ENCODE measurements at regions of chr5 and their contacts with region 1.

Region 1: DNA sequence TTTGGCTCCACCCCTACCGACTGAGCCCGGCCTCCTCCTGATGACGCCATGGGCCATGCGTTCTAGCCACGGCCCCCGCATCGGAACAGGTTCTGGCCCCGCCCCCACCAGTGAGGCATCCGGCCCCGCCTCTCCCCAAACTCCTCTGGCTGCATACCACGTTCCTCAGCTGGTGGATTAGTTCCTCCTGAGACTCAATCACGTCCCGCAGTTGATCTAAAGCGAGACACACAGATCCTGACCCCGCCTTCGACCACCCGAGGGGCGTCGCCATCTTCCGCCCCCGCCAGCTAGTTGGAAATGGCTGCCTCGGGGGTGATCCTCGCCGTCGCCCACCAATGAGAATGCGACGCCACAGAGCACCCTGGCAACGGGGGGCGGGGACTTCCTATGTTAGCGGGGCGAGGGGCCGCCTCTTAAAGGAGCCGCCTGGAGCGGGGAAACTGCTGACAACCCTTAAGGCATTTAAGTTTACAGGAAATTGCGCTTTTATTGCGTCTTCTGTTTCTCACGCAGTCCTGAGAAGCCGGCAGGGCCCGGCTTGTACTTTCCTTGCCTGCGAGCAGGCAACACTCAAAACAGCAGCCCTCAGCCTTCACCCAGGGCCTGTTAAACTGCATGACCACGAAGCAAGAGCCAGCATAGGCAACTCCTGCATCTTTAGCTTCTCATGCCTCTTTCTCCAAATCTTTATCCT is at the start of gene SPATA24:
- DNase-seq: peak; percentile 95
- ATAC-seq: peak; percentile 86
- H3K4me3 ChIP-seq: peak within 1 kb of the TSS; percentile 74
- H3K27ac ChIP-seq: peak within 1 kb of the TSS; percentile 83
- H3K4me1 ChIP-seq: peaks cover 30% of the 10 kb centered on the region
- H3K27me3 ChIP-seq: no peaks in the 10 kb centered on the region
- CTCF ChIP-seq: no peak
- EP300 ChIP-seq: 0 out of 4 replicates have a peak, but pooled peaks of 1 of the 2 experiments have one; percentile 14
- POLR2A ChIP-seq: peak; percentile 78
- RAD21 ChIP-seq: no peak
- polyA plus RNA-seq, gene SPATA24: 7.6 to 8.5 TPM

Region 2: GRCh38 chr5:139104577-139105276 is 299.2 kb before region 1 on chr5:
- CTCF ChIA-PET with region 1: no interaction called
- POLR2A ChIA-PET with region 1: no interaction called
- RAD21 ChIA-PET with region 1: no interaction called
- SMC1A ChIA-PET with region 1: no interaction called
- in situ Hi-C with region 1: no loop called
- intact Hi-C with region 1: no loop called
- DNase-seq: no peak
- ATAC-seq: no peak
- H3K4me3 ChIP-seq: no peak overlapping the region
- H3K27ac ChIP-seq: no peak overlapping the region
- H3K4me1 ChIP-seq: no peaks in the 10 kb centered on the region
- H3K27me3 ChIP-seq: no peaks in the 10 kb centered on the region
- CTCF ChIP-seq: no peak
- EP300 ChIP-seq: no peak
- POLR2A ChIP-seq: no peak
- RAD21 ChIP-seq: no peak

Region 3: GRCh38 chr5:139241139-139241538 is 162.8 kb before region 1 on chr5:
- CTCF ChIA-PET with region 1: no interaction called
- POLR2A ChIA-PET with region 1: no interaction called
- RAD21 ChIA-PET with region 1: no interaction called
- SMC1A ChIA-PET with region 1: no interaction called
- in situ Hi-C with region 1: no loop called
- intact Hi-C with region 1: no loop called
- DNase-seq: no peak
- ATAC-seq: no peak
- H3K4me3 ChIP-seq: no peak overlapping the region
- H3K27ac ChIP-seq: no peak overlapping the region
- H3K4me1 ChIP-seq: peaks cover 2% of the 10 kb centered on the region; the same call in 1 of the 2 replicates
- H3K27me3 ChIP-seq: no peaks in the 10 kb centered on the region
- CTCF ChIP-seq: no peak
- EP300 ChIP-seq: no peak
- POLR2A ChIP-seq: no peak
- RAD21 ChIP-seq: no peak

Region 4: DNA sequence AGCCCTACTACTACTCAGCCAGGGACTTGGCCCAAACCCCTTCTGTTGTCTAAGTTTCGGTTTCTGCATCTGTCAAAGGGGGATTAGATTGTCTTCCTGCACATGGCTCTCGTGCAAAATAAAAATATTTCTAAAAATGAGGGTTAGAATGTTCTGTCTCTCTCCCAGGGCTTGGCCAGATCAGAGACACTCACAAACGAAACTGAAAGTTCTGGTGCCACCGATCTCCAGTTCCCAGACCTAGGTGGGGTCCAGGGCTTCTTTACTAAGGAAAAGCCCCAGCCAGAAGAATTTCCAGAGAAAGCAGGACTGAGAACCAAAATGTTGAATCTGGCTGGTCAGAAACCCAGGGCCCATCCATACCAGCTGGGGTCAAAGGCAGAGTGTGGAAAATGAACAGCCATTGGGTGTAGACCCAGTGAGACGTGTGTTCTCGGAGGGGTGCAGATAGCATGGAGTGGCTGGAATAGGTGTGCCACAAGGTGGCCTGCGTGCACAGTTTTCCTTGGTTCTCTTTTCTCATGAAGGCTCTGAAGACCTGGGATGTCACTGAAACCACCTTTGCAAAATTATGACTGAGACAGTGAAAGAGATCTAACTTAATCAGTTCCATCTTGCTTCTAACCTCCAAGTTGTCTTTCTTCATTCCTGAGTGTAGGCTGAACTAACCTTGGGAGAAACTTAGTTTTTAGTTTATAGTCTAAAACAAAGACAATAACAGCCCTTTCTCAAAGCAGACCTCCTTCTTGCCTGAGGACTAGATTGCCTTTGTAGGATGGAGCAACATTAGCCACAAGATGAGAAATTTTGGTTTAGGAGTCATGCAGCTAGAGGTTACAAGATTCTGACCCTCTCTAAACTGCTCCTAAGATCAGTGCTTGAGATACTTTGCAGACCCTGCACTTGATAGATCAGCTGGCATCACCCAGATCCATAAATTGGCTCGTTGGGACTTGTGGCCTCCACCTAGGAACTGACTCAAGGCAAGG is 18.6 kb before region 1 on chr5:
- CTCF ChIA-PET with region 1: interaction called, 26 read pairs
- POLR2A ChIA-PET with region 1: interaction called, 74 read pairs
- RAD21 ChIA-PET with region 1: interaction called, 14 read pairs
- SMC1A ChIA-PET with region 1: interaction called, 19 read pairs
- in situ Hi-C with region 1: no loop called
- intact Hi-C with region 1: no loop called
- DNase-seq: no peak
- ATAC-seq: peak; percentile 2; the same call in 2 of the 3 replicates
- H3K4me3 ChIP-seq: peak overlapping the region; percentile 17; the same call in 1 of the 2 replicates
- H3K27ac ChIP-seq: peak overlapping the region; percentile 62
- H3K4me1 ChIP-seq: peaks cover 42% of the 10 kb centered on the region
- H3K27me3 ChIP-seq: no peaks in the 10 kb centered on the region
- CTCF ChIP-seq: peak; percentile 9 to 29 (median 9); a peak in 2 of 6 replicates
- EP300 ChIP-seq: no peak
- POLR2A ChIP-seq: no peak
- RAD21 ChIP-seq: 0 out of 2 replicates have a peak, but pooled peaks have one; percentile 17

Region 5: DNA sequence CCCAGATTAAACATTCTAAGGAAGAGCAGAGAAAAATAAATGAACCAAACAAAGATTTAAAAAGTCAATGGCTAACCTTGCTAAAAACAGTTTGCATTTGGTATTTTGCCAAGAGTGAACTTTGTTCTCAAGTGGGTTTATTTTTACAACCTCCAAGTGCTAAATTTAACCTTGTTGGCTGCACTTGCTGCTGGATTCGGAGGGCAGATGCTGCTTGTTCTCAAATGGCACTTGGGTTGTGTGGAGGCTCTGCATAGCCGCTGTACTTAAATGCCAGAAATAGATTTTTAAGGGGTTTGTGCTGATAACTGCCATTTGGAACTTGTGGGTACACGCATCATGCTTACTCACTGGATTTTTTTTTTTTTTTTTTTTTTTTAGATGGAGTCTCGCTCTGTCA is 13.3 kb after region 1 on chr5:
- CTCF ChIA-PET with region 1: interaction called, 39 read pairs
- POLR2A ChIA-PET with region 1: interaction called, 10 read pairs
- RAD21 ChIA-PET with region 1: interaction called, 16 read pairs
- SMC1A ChIA-PET with region 1: interaction called, 14 read pairs
- in situ Hi-C with region 1: no loop called
- intact Hi-C with region 1: no loop called
- DNase-seq: no peak
- ATAC-seq: no peak
- H3K4me3 ChIP-seq: no peak overlapping the region
- H3K27ac ChIP-seq: no peak overlapping the region
- H3K4me1 ChIP-seq: peaks cover 21% of the 10 kb centered on the region
- H3K27me3 ChIP-seq: no peaks in the 10 kb centered on the region
- CTCF ChIP-seq: no peak
- EP300 ChIP-seq: no peak
- POLR2A ChIP-seq: no peak
- RAD21 ChIP-seq: no peak

Region 6: DNA sequence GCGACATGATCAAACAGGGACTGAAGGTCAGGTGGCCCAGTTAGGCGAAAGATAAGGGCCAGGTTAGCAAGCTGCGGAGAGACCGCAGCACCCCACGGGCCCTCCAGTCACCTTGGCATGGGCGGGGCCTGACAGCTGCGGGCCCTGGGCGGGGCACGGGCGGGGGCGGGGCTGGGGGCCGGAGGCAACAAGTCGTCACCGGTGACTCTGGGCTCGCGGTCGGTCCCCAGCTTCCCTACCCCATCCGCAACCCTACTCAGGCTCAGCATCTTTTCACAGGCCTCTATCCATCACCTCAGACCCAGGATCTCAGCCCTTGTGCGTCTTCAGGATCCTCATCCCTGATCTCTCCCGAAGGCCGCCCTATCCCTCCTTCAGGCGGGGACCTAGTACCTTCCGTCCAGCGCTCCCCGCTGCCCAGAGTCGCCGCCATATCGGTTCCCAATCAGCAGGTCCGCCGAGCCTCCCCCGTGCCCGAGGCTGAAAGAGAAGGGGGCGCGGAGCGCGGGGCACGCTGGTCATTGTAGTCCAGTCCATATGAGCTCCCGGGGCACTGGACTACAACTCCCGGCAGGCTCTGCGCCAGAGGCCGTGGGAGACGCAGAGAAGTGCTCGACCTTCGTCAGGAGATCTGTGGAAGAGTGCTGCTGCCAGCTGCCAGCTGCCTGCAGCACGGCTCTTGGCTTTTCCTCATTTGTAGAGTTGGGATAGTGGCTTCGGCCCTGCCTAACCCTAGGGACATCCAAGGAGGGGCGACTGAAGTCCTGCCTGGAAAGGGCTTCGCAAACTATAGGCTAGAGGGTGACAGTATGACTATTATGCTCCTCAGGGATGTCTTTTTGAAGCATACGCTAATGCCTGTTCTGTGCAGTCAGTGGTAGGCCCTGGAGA is 35.3 kb after region 1 on chr5 and contains the start of gene DNAJC18:
- CTCF ChIA-PET with region 1: interaction called, 4 read pairs
- POLR2A ChIA-PET with region 1: interaction called, 20 read pairs
- RAD21 ChIA-PET with region 1: interaction called, 17 read pairs
- SMC1A ChIA-PET with region 1: interaction called, 4 read pairs
- in situ Hi-C with region 1: no loop called
- intact Hi-C with region 1: no loop called
- DNase-seq: peak; percentile 53
- ATAC-seq: peak; percentile 81
- H3K4me3 ChIP-seq: peak within 1 kb of the TSS; percentile 84
- H3K27ac ChIP-seq: peak within 1 kb of the TSS; percentile 95
- H3K4me1 ChIP-seq: peaks cover 24% of the 10 kb centered on the region
- H3K27me3 ChIP-seq: no peaks in the 10 kb centered on the region
- CTCF ChIP-seq: no peak
- EP300 ChIP-seq: no peak
- POLR2A ChIP-seq: peak; percentile 74
- RAD21 ChIP-seq: 0 out of 2 replicates have a peak, but pooled peaks have one; percentile 3
- polyA plus RNA-seq, gene DNAJC18: 20.5 to 26.7 TPM

Region 7: GRCh38 chr5:139446956-139447779 is 43.2 kb after region 1 on chr5:
- CTCF ChIA-PET with region 1: no interaction called
- POLR2A ChIA-PET with region 1: interaction called, 3 read pairs
- RAD21 ChIA-PET with region 1: interaction called, 4 read pairs
- SMC1A ChIA-PET with region 1: no interaction called
- in situ Hi-C with region 1: no loop called
- intact Hi-C with region 1: loop called (anchors 2 kb)
- DNase-seq: peak; percentile 87
- ATAC-seq: peak; percentile 85
- H3K4me3 ChIP-seq: no peak overlapping the region
- H3K27ac ChIP-seq: peak overlapping the region; percentile 68
- H3K4me1 ChIP-seq: peaks cover 29% of the 10 kb centered on the region
- H3K27me3 ChIP-seq: no peaks in the 10 kb centered on the region
- CTCF ChIP-seq: no peak
- EP300 ChIP-seq: peak; percentile 94 to 97
- POLR2A ChIP-seq: no peak
- RAD21 ChIP-seq: no peak

Region 8: GRCh38 chr5:139472386-139473030 is 68.6 kb after region 1 on chr5:
- CTCF ChIA-PET with region 1: no interaction called
- POLR2A ChIA-PET with region 1: no interaction called
- RAD21 ChIA-PET with region 1: no interaction called
- SMC1A ChIA-PET with region 1: no interaction called
- in situ Hi-C with region 1: no loop called
- intact Hi-C with region 1: no loop called
- DNase-seq: no peak
- ATAC-seq: no peak
- H3K4me3 ChIP-seq: no peak overlapping the region
- H3K27ac ChIP-seq: no peak overlapping the region
- H3K4me1 ChIP-seq: peaks cover 12% of the 10 kb centered on the region
- H3K27me3 ChIP-seq: no peaks in the 10 kb centered on the region
- CTCF ChIP-seq: no peak
- EP300 ChIP-seq: no peak
- POLR2A ChIP-seq: no peak
- RAD21 ChIP-seq: no peak

Region 9: GRCh38 chr5:139696894-139697658 is 293.1 kb after region 1 on chr5:
- CTCF ChIA-PET with region 1: no interaction called
- POLR2A ChIA-PET with region 1: no interaction called
- RAD21 ChIA-PET with region 1: no interaction called
- SMC1A ChIA-PET with region 1: no interaction called
- in situ Hi-C with region 1: no loop called
- intact Hi-C with region 1: no loop called
- DNase-seq: no peak
- ATAC-seq: peak; percentile 46
- H3K4me3 ChIP-seq: 0 out of 2 replicates have a peak overlapping the region, but pooled peaks have one; percentile 17
- H3K27ac ChIP-seq: no peak overlapping the region
- H3K4me1 ChIP-seq: peaks cover 12% of the 10 kb centered on the region
- H3K27me3 ChIP-seq: peaks cover 0 to 3% of the 10 kb centered on the region in 2 experiments; a peak in 2 of 4 replicates
- CTCF ChIP-seq: no peak
- EP300 ChIP-seq: no peak
- POLR2A ChIP-seq: no peak
- RAD21 ChIP-seq: no peak

Measured in GM12878 (cell line).